Left lung (tissue), 14 donors: ENCODE measurements at regions of chr3 and their contacts with region 1.

Region 1: DNA sequence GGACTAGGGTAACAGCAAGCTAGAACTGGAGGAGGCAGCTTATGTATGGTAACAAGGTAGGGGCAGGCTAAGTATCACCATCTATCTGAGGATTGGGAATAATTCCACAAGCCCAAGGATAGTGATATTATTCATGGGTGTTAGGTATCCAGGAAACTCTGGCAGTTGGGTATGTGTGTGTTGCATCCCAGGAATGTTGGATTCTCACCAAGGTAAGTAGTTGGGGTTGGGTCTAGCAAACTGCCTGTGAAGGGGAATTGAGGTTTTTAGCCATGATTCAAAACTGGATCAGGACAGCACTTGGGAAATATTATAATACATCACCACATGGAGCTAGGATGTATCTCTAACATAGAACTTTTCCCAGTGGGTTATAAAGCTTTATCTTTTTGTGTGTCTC is 626.4 kb upstream of the GOLIM4 start:
- DNase-seq: no peak
- ATAC-seq: no peak
- H3K4me3 ChIP-seq: no peak overlapping the region
- H3K27ac ChIP-seq: no peak overlapping the region
- H3K4me1 ChIP-seq: no peaks in the 10 kb centered on the region
- H3K27me3 ChIP-seq: no peaks in the 10 kb centered on the region
- CTCF ChIP-seq: no peak

Region 2: GRCh38 chr3:168671082-168671481 is 51.0 kb before region 1 on chr3:
- intact Hi-C with region 1: loop called in 1 of 2 experiments (anchors 10 kb)
- DNase-seq: peak in 1 of 4 donors; percentile 3
- ATAC-seq: no peak
- H3K4me3 ChIP-seq: no peak overlapping the region
- H3K27ac ChIP-seq: no peak overlapping the region
- H3K4me1 ChIP-seq: no peaks in the 10 kb centered on the region
- H3K27me3 ChIP-seq: no peaks in the 10 kb centered on the region
- CTCF ChIP-seq: no peak